Activated T-helper 2 cell treated with anti-CD3 and anti-CD28 coated beads, Interferon-gamma antibody, Interleukin-2, Interleukin-4, amounts not matched to agents 10 μg/mL and 5 μg/mL and 100 μg/mL, durations not matched to agents 14 hours and 24 hours and 36 hours (primary cell): ENCODE measurements at regions of chr12 and their contacts with region 1.

Region 1: DNA sequence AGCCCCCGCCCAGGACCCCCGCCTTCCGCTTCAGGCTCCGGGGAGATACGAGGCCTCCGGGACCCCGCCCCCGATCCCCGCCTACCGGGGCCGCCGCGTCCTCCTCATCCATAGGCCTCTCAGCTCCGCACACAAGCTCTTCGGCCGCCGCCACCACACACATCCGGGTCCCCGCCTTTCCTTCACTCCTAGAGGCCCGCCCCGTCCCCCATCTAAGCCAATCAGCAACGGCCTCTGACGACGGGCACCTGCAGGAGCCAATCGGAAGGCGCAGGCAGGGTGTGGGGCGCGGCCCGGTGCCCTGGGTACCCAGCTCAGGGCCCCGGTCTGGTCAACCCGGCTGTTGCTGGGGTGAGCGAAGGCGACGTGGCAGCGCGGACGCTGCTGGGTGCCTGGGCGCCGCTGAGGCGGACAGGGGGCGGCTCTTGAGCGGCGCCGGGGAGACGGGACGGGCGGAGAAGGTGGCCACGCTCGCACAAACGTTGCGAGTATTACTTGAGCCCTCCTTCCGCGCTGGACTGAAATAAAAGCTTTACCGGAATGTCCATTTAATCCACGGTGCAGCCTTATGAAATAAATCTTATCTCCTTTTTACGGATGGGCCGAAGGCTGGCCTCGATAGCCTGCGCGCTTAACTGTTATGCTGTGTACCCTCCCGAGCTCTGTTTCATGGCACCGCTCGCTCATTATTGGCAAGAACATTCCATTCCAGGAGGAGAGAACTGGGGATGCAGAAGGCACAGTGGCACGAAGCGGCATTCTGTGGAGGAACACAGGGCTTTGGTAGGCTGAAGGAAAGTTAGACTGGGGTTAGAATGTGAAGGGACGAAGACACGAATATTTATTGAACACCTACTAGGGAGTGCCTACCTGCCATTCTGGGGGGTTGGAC is at the start of gene SPRYD3:
- DNase-seq: peak; percentile 96
- H3K4me3 Mint-ChIP-seq: peak within 1 kb of the TSS; percentile 89
- H3K27ac Mint-ChIP-seq: peak within 1 kb of the TSS; percentile 89
- H3K4me1 Mint-ChIP-seq: peaks cover 22% of the 10 kb centered on the region
- H3K27me3 Mint-ChIP-seq: no peaks in the 10 kb centered on the region
- total RNA-seq, gene SPRYD3: 35.1 and 36.2 TPM in 2 replicates

Region 2: DNA sequence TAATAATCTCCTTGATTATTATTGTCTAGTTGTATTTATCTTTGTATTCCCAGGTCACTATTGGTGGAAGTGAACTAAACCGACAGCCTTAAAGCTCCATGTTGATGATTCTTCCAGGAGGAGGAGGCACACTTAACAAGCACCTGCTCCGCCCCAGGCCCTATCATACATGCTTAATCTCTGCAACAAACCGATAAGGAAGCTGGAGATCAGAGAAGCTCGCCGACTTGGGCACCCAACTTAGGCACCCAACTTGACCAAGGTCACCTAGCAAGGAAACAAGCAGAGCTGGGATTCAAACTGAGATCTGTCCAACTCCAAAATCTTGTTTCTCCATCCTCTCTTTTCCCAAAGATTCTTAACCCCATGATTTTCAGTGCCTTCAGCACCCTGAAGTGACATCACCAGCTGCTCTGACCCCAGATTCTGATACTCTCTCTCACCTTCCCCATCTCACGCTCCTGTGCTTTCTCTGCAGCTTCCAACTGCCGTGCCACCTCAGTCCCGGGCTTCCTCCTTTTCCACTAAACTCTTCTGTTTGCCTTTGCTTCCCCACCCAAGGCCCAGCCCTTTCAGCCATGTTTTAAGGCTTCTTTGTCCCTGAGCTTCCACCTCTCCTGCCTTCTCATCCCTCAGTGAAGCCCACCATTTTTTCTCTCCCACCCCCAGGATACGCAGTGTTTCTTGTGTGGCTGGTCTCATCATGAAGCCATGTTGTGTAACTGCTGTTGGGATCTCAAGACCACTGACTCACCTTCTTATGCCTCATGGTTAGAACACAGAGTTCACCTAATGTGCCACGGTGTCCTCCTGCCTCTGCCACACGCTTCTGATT is 137.2 kb before region 1 on chr12:
- intact Hi-C with region 1: no loop called
- DNase-seq: no peak
- H3K4me3 Mint-ChIP-seq: no peak overlapping the region
- H3K27ac Mint-ChIP-seq: no peak overlapping the region
- H3K4me1 Mint-ChIP-seq: no peaks in the 10 kb centered on the region
- H3K27me3 Mint-ChIP-seq: peaks cover 30% of the 10 kb centered on the region

Region 3: GRCh38 chr12:53047221-53048042 is 32.0 kb before region 1 on chr12:
- intact Hi-C with region 1: loop called (anchors 2 kb)
- DNase-seq: peak; percentile 61
- H3K4me3 Mint-ChIP-seq: peak overlapping the region; percentile 52
- H3K27ac Mint-ChIP-seq: peak overlapping the region; percentile 17
- H3K4me1 Mint-ChIP-seq: peaks cover 19% of the 10 kb centered on the region
- H3K27me3 Mint-ChIP-seq: peaks cover 2% of the 10 kb centered on the region

Region 4: DNA sequence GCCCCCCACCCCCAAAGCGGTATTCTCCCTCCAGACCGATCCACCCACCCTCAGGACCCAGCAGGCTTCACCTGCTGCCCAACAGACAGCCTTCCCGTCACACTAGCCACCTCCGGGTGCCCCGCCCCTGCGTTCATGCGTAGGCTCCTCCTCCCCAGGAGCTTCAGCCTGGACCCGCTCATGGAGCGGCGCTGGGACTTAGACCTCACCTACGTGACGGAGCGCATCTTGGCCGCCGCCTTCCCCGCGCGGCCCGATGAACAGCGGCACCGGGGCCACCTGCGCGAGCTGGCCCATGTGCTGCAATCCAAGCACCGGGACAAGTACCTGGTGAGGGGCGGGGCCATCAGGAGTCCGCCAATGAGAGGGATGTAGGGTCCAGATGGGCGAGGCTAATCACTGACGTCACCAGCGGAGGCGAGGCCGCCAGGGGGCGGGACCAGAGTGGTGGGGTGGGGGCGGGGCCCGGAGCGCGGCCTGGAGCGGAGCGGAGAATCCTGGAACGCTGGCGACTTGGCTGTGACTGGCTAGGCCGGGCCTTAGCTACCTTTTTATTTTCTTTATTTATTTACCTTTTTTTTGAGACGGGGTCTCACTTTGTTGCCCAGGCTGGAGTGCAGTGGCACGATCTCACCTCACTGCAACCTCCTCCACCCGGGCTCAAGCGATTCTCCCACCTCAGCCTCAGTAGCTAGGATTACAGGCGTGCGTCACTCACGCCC is 25.2 kb before region 1 on chr12:
- intact Hi-C with region 1: loop called (anchors 1 kb)
- DNase-seq: peak; percentile 88
- H3K4me3 Mint-ChIP-seq: peak overlapping the region; percentile 97
- H3K27ac Mint-ChIP-seq: peak overlapping the region; percentile 89
- H3K4me1 Mint-ChIP-seq: peaks cover 10% of the 10 kb centered on the region
- H3K27me3 Mint-ChIP-seq: no peaks in the 10 kb centered on the region

Region 5: DNA sequence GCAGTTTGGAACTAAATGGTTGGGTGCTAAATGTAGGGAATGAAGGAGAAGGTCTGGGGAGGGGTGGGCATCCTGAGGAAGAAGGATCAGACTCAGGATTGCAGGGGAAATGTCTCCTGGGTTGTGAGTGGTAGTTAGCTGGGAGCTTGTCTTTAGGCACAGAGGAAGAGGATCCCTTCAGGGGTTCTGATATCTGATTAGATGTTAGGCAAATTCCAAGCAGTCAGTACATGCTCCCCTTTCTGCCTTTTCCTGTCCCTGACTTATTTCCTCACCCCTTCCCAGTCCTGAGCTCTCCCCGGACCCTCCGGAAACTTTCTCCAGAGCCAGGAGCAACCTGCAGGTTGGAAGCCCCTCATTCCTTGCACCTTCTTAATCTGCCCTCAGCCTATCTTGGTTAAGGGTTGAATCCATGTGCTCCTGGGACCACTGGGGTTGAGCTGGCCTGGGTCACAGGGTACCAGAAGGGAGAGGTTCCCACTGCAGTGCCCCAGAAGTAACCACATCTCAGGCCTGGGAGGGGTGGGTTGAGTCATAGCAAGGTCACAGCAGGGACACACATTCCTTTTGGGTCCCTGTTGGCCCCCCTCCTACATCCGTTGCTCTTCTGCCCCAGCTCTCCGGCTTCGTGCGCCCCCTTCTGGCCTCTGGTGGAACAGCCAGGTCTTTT is 19.6 kb after region 1 on chr12:
- intact Hi-C with region 1: loop called (anchors 1 kb)
- DNase-seq: peak; percentile 81
- H3K4me3 Mint-ChIP-seq: peak overlapping the region; percentile 15
- H3K27ac Mint-ChIP-seq: no peak overlapping the region
- H3K4me1 Mint-ChIP-seq: peaks cover 41% of the 10 kb centered on the region
- H3K27me3 Mint-ChIP-seq: peaks cover 16% of the 10 kb centered on the region